HCT116 (cell line): ENCODE measurements at regions of chr2 and their contacts with region 1.

Region 1: GRCh38 chr2:8681786-8682692 is at the start of gene ID2:
- DNase-seq: peak; percentile 97
- ATAC-seq: peak; percentile 57
- H3K4me3 ChIP-seq: peak within 1 kb of the TSS; percentile 79 to 80
- H3K27ac ChIP-seq: peak within 1 kb of the TSS; percentile 97
- H3K4me1 ChIP-seq: peaks cover 10 to 64% of the 10 kb centered on the region in 2 experiments
- H3K27me3 ChIP-seq: no peaks in the 10 kb centered on the region
- CTCF ChIP-seq: no peak
- POLR2A ChIP-seq: peak; percentile 98
- RAD21 ChIP-seq: no peak
- total RNA-seq, gene ID2: 112 TPM

Region 2: GRCh38 chr2:7118606-7119503 is 1563.2 kb before region 1 on chr2:
- CTCF ChIA-PET with region 1: no interaction called
- POLR2A ChIA-PET with region 1: no interaction called
- RAD21 ChIA-PET with region 1: no interaction called
- intact Hi-C with region 1: loop called (anchors 5 kb)
- DNase-seq: no peak
- ATAC-seq: peak; percentile 78
- H3K4me3 ChIP-seq: no peak overlapping the region
- H3K27ac ChIP-seq: no peak overlapping the region
- H3K4me1 ChIP-seq: peaks cover 0 to 4% of the 10 kb centered on the region in 2 experiments; a peak in 2 of 4 replicates
- H3K27me3 ChIP-seq: peaks cover 7% of the 10 kb centered on the region; the same call in 1 of the 2 replicates
- CTCF ChIP-seq: peak; percentile 47 to 69 (median 48); a peak in 5 of 6 replicates
- POLR2A ChIP-seq: no peak
- RAD21 ChIP-seq: peak; percentile 74

Region 3: GRCh38 chr2:8004250-8004681 is 677.8 kb before region 1 on chr2:
- CTCF ChIA-PET with region 1: no interaction called
- POLR2A ChIA-PET with region 1: interaction called, 3 read pairs
- RAD21 ChIA-PET with region 1: no interaction called
- intact Hi-C with region 1: loop called (anchors 2 kb)
- DNase-seq: no peak
- ATAC-seq: no peak
- H3K4me3 ChIP-seq: no peak overlapping the region
- H3K27ac ChIP-seq: no peak overlapping the region
- H3K4me1 ChIP-seq: no peaks in the 10 kb centered on the region
- H3K27me3 ChIP-seq: no peaks in the 10 kb centered on the region
- CTCF ChIP-seq: no peak
- POLR2A ChIP-seq: no peak
- RAD21 ChIP-seq: no peak

Region 4: DNA sequence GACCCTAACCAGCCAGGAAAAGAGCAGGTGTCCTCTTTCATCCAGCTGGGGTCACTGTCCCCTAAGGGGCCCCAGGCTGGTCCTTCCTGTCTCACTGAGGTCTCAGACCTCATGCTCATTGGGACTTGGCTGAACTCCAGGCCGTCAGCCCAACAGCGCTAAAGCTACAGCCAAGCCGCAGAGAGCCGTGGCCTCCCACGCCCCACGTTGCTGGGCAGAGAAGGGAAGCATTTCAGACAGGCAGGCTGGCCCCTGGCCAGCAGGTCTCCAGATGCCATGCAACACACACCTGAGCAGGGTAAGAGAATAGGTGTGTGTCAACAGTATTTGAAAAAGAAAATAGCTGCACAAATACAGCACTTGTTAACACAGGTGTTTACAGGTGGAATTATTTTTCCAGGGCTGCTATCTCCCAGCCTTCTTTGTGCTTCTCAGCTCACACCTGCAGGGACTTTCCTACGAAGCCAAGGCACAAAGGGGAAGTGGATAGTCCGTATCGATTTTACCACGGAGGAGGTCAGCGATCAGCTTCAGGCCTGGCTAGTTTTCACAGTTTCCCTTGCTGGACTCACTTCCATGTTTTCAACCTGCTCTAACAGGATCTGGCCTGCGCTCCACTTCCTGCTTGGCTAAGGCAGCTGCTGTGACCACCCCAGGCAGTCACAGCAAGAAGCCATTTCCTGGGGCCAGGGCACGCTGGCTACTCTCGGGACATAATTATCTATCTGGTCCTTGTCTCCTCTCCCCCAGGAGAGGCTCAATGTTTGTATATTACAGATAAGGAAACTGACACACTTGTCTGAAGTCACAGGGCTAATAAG is 156.2 kb before region 1 on chr2:
- CTCF ChIA-PET with region 1: no interaction called
- POLR2A ChIA-PET with region 1: interaction called, 4 read pairs
- RAD21 ChIA-PET with region 1: no interaction called
- intact Hi-C with region 1: loop called (anchors 1 kb)
- DNase-seq: no peak
- ATAC-seq: peak; percentile 74
- H3K4me3 ChIP-seq: no peak overlapping the region
- H3K27ac ChIP-seq: no peak overlapping the region
- H3K4me1 ChIP-seq: peaks cover 8% of the 10 kb centered on the region in 2 experiments; a peak in 3 of 4 replicates
- H3K27me3 ChIP-seq: no peaks in the 10 kb centered on the region
- CTCF ChIP-seq: peak in 2 of 3 experiments; percentile 21 to 24; a peak in 2 of 6 replicates
- POLR2A ChIP-seq: no peak
- RAD21 ChIP-seq: peak; percentile 75

Region 5: DNA sequence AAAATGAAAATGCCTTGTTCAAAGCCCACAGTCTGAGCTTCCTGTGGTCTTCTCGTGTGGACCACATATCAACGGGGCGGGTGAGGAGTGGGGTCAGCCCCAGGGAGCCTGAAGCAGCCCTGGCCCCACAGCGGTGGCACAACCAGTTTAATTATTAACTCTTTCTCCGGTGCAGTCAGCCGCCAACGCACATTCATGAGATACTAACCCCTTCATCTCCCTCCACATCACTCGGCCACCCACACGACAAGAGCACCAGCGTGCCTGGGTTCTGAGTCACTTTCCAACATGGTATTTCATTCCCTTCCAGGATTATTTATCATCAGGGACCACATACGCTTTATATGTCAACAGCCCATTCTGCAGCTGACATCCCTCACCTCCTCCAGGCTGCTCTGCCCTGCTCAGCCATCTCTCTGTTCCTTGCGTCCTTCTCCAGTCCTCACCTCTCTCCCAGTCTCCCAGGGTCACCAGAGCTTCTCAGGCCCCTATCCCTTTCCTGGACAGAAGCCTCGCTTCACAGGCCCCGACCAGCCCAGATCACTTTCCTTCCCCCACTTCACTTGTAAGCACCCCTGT is 48.2 kb before region 1 on chr2:
- CTCF ChIA-PET with region 1: interaction called, 3 read pairs
- POLR2A ChIA-PET with region 1: interaction called, 26 read pairs
- RAD21 ChIA-PET with region 1: interaction called, 3 to 4 read pairs
- intact Hi-C with region 1: no loop called
- DNase-seq: peak; percentile 82
- ATAC-seq: peak; percentile 71
- H3K4me3 ChIP-seq: peak overlapping the region; percentile 25 to 47
- H3K27ac ChIP-seq: peak overlapping the region; percentile 73
- H3K4me1 ChIP-seq: peaks cover 72 to 84% of the 10 kb centered on the region in 2 experiments
- H3K27me3 ChIP-seq: no peaks in the 10 kb centered on the region
- CTCF ChIP-seq: no peak
- POLR2A ChIP-seq: no peak
- RAD21 ChIP-seq: no peak